ENCODE measurements at regions of chr9 and their contacts with region 1.

Region 1: GRCh38 chr9:4510546-4511322 is 20.5 kb downstream of the SLC1A1 start:
- DNase-seq: peak; percentile 52
- H3K4me3 Mint-ChIP-seq: peak overlapping the region; percentile 40
- H3K27ac Mint-ChIP-seq: peak overlapping the region; percentile 82
- H3K4me1 Mint-ChIP-seq: peaks cover 75% of the 10 kb centered on the region
- H3K27me3 Mint-ChIP-seq: no peaks in the 10 kb centered on the region
- CTCF ChIP-seq: no peak

Region 2: DNA sequence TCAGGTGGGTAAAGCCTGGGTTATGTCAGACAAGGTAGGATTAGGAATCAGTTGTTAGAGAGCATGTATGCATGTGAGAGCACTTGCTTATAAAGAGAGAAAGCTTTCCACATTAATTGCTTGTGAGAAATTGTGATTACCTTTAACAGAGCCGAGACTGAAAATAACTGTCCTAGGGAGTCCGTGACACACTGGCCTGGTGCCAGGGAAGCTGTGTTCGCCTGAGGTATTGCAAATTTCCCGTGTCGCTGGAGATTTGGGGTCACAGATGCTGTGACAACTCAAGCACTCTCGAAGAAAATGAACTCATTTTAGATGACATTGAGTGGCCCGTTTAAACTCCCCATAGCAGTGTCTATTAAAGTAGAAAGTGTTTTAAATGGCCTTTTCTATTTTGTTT is 10.8 kb before region 1 on chr9:
- CTCF ChIA-PET with region 1: interaction called, 3 read pairs
- intact Hi-C with region 1: loop called (anchors 1 kb)
- DNase-seq: peak; percentile 54
- H3K4me3 Mint-ChIP-seq: peak overlapping the region; percentile 55
- H3K27ac Mint-ChIP-seq: peak overlapping the region; percentile 85
- H3K4me1 Mint-ChIP-seq: peaks cover 63% of the 10 kb centered on the region
- H3K27me3 Mint-ChIP-seq: no peaks in the 10 kb centered on the region
- CTCF ChIP-seq: no peak

Region 3: DNA sequence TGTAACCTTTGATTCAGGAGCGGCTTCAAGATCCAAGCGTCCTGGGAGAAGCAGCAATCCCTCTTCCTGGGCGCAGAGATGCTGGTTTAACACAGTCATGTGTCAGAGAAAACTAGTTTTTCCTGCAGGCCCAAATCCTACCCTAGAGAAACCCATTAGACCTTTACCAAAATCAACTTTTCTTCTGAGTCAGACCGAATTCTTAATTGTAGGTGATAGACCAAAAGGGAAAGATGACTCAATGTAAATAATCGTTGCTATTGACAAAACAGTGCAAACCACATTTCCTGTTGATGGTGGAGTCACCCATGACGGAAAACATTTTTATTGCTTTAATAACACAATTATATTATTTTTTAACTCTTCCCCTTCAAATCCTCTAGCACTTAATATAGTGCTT is 19.6 kb after region 1 on chr9:
- CTCF ChIA-PET with region 1: no interaction called
- intact Hi-C with region 1: loop called (anchors 1 kb)
- DNase-seq: peak; percentile 45
- H3K4me3 Mint-ChIP-seq: no peak overlapping the region
- H3K27ac Mint-ChIP-seq: peak overlapping the region; percentile 78
- H3K4me1 Mint-ChIP-seq: peaks cover 30% of the 10 kb centered on the region
- H3K27me3 Mint-ChIP-seq: no peaks in the 10 kb centered on the region
- CTCF ChIP-seq: no peak

Measured in Calu3 (cell line).